ENCODE measurements at regions of chr16 and their contacts with region 1.

Region 1: GRCh38 chr16:67468731-67469130 is 12.2 kb downstream of the ATP6V0D1 start:
- DNase-seq: no peak
- H3K4me3 Mint-ChIP-seq: no peak overlapping the region
- H3K27ac Mint-ChIP-seq: no peak overlapping the region
- H3K4me1 Mint-ChIP-seq: peaks cover 25% of the 10 kb centered on the region
- H3K27me3 Mint-ChIP-seq: no peaks in the 10 kb centered on the region

Region 2: GRCh38 chr16:65547772-65548446 is 1920.8 kb before region 1 on chr16:
- CTCF ChIA-PET with region 1: no interaction called
- intact Hi-C with region 1: no loop called
- DNase-seq: no peak
- H3K4me3 Mint-ChIP-seq: no peak overlapping the region
- H3K27ac Mint-ChIP-seq: no peak overlapping the region
- H3K4me1 Mint-ChIP-seq: no peaks in the 10 kb centered on the region
- H3K27me3 Mint-ChIP-seq: no peaks in the 10 kb centered on the region

Region 3: DNA sequence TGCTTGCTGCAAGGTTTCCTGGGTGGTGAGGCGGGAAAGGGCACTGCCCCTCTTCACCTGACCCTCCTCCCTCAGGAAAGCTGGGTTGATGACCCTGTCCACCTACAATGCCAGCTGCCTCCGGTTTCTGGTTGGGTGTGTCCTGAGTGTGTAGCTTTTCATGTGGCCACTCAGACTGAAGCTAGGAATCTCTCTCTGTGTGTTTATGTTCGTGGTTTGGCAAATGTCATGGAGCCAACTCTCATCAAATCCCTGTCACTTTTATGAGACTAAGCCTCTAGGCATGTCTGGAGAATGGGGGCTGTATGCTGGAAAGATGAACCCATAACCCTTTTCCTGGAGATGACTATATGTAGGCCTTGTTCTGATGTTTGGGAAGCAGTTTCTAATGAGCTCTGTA is 172.3 kb before region 1 on chr16:
- CTCF ChIA-PET with region 1: no interaction called
- intact Hi-C with region 1: no loop called
- DNase-seq: no peak
- H3K4me3 Mint-ChIP-seq: no peak overlapping the region
- H3K27ac Mint-ChIP-seq: no peak overlapping the region
- H3K4me1 Mint-ChIP-seq: no peaks in the 10 kb centered on the region
- H3K27me3 Mint-ChIP-seq: no peaks in the 10 kb centered on the region

Region 4: DNA sequence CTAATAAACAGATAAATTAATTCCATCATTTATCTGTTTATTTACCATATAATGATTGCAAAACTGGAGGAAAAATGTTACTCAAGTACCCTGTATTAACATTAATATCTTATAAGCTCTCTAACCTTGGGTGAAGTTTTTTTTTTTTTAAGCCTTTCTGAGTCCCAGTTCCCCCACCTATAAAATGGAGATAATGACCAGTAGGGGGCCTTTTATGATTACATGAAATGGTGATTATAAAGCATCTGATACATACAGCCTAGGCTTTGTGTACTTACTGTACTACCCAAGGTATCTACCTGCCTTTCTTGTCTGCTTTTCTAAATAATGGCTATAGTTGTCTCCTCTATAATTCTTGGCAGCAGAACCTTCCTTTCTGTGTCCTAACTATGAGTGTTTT is 119.6 kb before region 1 on chr16:
- CTCF ChIA-PET with region 1: no interaction called
- intact Hi-C with region 1: loop called (anchors 5 kb)
- DNase-seq: no peak
- H3K4me3 Mint-ChIP-seq: no peak overlapping the region
- H3K27ac Mint-ChIP-seq: no peak overlapping the region
- H3K4me1 Mint-ChIP-seq: no peaks in the 10 kb centered on the region
- H3K27me3 Mint-ChIP-seq: no peaks in the 10 kb centered on the region

Region 5: DNA sequence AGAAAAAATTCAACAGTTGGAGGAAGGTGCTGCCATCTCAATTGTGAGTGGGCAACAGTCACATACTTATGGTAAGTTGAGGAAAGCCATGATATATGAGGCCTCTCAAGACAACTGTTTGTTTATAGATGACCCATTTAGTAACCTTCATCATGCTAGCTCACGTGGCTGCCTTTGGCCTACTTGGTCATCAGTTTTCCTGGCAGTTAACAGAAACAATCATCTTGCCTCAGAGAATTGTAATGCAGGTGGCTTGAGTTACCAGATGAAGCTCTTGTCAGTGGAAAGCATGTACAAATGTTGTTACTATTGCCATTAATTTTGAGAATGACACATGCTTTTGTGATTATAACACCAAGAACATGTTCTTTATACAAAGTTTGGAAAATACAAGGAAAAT is 90.1 kb before region 1 on chr16:
- CTCF ChIA-PET with region 1: no interaction called
- intact Hi-C with region 1: no loop called
- DNase-seq: no peak
- H3K4me3 Mint-ChIP-seq: no peak overlapping the region
- H3K27ac Mint-ChIP-seq: no peak overlapping the region
- H3K4me1 Mint-ChIP-seq: no peaks in the 10 kb centered on the region
- H3K27me3 Mint-ChIP-seq: peaks cover 3% of the 10 kb centered on the region

Region 6: DNA sequence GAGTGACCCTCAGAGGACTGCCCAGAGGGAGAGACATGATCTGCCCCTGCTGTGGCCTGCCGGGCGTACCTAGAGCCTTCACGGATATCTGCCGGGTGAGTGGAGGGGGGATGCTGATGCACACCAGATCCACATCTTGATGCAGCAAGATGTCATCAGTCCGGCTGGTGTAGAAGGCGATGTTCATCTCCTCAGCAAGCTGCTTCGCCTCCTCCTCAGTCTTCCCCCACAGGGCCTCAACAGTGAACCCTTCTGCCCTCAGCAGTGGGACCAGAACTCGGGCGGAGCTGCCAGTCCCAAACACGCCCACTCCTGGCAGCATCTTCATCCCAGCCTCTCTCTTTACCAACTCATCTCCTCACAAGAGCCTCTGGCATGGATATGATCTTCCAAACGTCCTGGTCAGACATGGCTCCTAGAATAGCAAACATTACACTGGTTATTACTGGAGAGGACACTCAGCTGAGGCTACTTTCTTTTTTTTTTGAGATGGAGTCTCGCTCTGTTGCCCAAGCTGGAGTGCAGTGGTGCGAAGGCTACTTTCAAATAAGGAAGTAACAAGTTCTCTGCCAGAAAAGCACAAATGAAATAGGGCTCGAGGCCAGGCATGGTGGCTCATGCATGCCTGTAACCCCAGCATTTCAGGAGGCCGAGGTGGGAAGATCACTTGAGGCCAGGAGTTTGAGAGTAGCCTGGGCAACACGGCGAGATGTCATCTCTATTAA is 216.8 kb after region 1 on chr16:
- CTCF ChIA-PET with region 1: no interaction called
- intact Hi-C with region 1: no loop called
- DNase-seq: no peak
- H3K4me3 Mint-ChIP-seq: no peak overlapping the region
- H3K27ac Mint-ChIP-seq: no peak overlapping the region
- H3K4me1 Mint-ChIP-seq: peaks cover 10% of the 10 kb centered on the region
- H3K27me3 Mint-ChIP-seq: no peaks in the 10 kb centered on the region

Measured in activated naive CD4-positive, alpha-beta T cell treated with anti-CD3 and anti-CD28 coated beads for 36 hours (primary cell).